ENCODE measurements at regions of chr17 and their contacts with region 1.

Region 1: DNA sequence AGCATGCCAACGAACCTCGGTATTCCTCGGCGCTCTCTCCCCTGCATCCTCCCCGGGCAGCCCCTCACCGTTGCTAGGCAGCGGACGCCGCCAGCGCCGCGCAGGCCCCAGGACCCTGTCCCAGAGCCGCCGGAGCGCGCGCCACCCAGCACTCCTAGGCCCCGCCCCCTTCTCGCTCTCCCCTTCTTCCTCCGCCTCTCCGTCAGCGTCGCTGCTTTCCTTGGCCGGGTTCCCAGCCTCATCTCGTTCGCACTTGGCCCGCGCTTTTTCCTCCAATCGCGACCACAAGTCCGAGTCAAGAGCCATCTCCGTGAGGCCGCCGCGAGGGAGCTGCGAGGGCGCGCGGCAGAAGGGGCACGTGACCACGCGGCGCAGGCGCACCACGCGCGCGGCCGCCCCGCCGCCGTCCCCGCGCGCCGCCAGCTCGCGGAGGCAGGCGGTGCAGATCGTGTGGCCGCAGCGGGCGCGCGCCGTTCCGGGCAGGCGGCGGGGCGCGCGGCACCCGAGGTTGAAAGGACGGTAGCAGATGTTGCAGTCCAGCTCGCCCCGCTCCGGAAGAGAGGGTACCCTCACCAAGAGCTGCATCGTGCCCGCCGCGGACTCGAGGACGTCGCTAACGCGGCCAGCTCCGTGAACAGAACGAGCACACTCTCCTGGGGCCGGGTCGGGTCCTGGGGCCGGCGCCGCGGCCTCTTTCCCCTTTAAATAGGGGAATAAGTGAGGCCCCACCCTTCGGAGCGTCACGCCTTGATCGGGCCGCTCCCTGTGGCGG is at the start of gene RNF227:
- DNase-seq: peak; percentile 84
- H3K4me3 Mint-ChIP-seq: peak within 1 kb of the TSS; percentile 88
- H3K27ac Mint-ChIP-seq: peak within 1 kb of the TSS; percentile 93
- H3K4me1 Mint-ChIP-seq: peaks cover 38% of the 10 kb centered on the region
- H3K27me3 Mint-ChIP-seq: no peaks in the 10 kb centered on the region
- total RNA-seq, gene RNF227: 4.4 to 4.5 TPM

Region 2: DNA sequence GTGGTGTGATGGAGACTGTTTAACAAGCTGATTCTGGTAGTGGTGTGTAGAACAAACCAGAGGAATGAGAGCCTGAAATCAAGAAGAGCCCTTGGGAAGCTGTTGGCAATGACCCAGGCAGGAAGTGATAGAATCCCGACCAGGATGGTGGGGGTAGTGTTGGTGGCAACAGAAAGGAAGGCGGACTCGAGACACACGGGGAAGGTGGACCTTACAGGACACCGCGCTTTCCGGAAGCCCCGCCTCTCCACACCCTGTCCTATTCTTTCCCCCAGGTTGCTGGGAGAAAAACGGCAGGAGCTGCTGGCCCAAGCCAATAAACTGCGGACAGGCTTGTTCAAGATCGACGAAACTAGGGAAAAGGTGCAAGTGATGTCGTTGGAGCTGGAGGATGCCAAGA is 111.8 kb before region 1 on chr17:
- CTCF ChIA-PET with region 1: no interaction called
- POLR2A ChIA-PET with region 1: no interaction called
- DNase-seq: no peak
- H3K4me3 Mint-ChIP-seq: no peak overlapping the region
- H3K27ac Mint-ChIP-seq: no peak overlapping the region
- H3K4me1 Mint-ChIP-seq: no peaks in the 10 kb centered on the region
- H3K27me3 Mint-ChIP-seq: peaks cover 3% of the 10 kb centered on the region

Region 3: GRCh38 chr17:7903154-7904103 is 12.4 kb before region 1 on chr17:
- CTCF ChIA-PET with region 1: interaction called, 17 read pairs
- POLR2A ChIA-PET with region 1: no interaction called
- DNase-seq: no peak
- H3K4me3 Mint-ChIP-seq: no peak overlapping the region
- H3K27ac Mint-ChIP-seq: peak overlapping the region; percentile 39
- H3K4me1 Mint-ChIP-seq: no peaks in the 10 kb centered on the region
- H3K27me3 Mint-ChIP-seq: no peaks in the 10 kb centered on the region

Region 4: DNA sequence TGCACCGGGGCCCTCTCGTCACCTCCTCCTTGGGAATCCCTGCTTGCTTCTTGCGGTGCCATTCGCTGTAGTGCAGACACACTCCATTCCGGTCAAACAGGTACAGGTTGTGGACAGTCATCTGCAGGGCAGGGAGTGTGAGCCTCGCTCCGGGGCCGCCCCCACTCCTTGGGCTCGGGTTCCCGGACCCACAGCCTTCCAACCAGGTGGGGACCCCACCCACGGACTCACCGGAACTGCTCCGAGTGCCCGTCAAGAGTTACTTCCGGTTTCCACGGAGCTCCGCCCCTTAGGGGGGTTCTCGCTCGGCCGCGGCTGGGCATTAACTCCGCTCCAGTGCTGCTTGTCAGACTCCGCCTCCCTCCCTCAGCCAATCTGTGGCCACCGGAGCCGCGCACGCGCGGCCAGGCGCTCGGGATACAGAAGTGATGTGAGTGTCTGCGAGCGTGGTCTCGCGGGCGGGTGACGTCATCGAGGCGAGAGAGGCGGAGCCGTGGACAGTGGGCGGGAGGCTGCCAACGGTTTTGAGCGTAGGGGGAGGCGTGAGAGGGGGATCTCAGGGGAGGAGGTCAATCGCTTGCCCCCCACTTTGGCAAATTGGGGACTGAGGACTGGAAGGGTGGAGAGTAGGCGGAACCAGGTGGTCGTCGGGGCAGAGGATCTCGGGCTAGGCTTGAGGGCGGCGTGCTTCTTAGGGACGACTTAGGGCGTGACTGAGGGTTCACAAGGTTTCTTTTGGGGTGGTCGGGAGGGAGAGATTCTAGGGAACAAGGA is 16.1 kb after region 1 on chr17 and contains the starts of genes CNTROB and TRAPPC1:
- CTCF ChIA-PET with region 1: interaction called, 16 read pairs
- POLR2A ChIA-PET with region 1: interaction called, 3 read pairs
- DNase-seq: peak; percentile 100
- H3K4me3 Mint-ChIP-seq: peak within 1 kb of the TSS; percentile 94
- H3K27ac Mint-ChIP-seq: peak within 1 kb of the TSS; percentile 96
- H3K4me1 Mint-ChIP-seq: peaks cover 55% of the 10 kb centered on the region
- H3K27me3 Mint-ChIP-seq: no peaks in the 10 kb centered on the region
- total RNA-seq, gene CNTROB: 74.3 to 77.4 TPM
- total RNA-seq, gene TRAPPC1: 235 to 251 TPM